GM13976 (cell line): ENCODE measurements at regions of chr12 and their contacts with region 1.

Region 1: GRCh38 chr12:52032804-52033502 is 18.3 kb upstream of the NR4A1 start:
- DNase-seq: peak; percentile 96
- CTCF ChIP-seq: no peak

Region 2: DNA sequence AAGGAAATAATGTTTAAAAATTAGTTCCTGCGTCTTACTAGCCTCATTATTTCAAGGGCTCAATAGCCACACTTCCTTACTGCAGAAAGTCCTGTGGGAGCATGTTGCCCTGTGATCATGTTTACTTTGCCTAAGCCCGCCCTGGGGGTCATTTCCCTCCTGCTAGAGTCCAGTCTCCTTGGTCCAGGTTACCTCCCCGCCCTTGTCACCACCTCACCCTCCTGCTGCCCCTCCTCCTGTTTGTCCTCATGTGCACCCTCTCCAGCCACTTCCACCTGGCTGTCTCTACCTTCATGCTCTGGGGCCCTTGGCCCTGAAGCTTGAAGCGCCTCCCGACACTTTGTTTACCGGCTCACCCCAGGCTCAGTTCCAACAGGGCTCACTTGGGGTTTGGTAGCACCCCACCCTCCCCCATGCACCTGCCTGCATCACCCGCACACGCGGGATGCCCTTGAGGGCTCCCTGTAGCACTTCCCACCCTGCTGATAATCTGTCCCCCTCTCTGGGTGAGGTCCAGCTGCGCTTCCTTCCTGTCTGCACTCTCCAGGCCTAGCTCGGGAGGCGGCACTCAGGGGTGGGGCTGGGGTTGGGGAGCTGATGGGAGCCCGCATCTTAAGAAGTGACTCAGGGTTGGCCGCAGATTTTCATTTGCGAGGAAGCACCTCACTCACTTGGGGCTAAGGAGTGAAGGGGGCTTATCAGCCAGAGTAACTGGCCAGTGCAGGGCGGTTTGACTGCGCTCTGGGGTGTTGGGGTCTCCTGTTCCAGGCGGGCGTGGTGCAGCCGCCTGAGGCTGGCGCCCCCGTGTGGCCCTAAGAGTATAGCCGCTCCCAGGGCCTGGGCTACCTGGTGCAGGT is 86.7 kb after region 1 on chr12:
- in situ Hi-C with region 1: loop called (anchors 5 kb)
- DNase-seq: peak; percentile 74
- CTCF ChIP-seq: peak; percentile 78

Region 3: DNA sequence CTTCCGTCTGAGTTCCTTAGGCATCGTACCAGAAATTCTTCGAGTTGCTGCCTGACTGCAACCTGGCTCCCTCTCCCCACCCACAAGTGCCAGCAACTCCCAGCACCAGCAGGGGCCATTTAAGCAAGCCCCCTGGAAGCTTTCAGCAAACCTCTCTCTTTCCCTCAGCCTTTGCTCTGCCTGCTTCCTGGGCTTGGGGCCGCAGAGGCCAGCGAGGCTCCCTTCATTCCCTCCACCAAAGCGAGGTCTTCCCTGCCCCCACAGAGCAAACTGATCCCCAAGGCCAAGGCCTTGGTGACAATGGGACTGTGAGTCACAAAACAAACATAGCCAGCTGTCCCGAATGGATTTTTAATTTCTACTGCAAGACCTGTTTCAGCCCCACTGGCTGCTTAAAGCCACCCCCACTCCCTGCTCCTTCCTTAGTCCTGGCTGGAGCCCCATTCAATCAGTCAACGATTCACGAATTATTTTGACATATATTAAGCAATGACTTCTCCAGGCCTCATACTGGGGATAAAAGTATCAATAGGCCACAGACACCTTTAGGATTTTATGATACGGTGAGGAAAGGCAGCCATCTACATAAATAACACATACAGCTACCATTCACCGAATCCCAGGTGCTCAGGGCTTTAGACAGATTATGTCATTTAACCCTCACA is 214.4 kb after region 1 on chr12:
- in situ Hi-C with region 1: no loop called
- DNase-seq: no peak
- CTCF ChIP-seq: no peak

Region 4: DNA sequence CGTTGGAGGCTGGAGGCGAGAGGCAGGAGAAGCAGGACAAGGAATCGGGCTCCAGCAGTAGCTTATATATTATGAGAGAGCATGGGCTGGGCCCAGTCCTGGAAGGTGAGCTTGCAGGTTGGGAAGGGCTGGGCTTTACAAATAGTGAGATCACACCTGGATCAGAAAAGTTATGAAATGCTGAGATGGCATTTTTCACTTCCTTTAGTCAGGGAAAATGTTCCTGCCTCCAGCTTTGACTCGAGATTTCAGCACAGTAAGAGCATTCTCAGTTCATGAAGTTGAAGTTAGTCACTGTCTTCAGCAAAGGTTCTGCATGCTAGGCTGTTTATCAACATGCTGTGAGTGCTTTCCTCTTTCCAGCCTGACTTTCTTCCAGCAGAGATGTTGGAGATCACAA is 440.8 kb after region 1 on chr12 and contains the start of gene KRT6C:
- in situ Hi-C with region 1: no loop called
- DNase-seq: no peak
- CTCF ChIP-seq: no peak